CD4-positive, alpha-beta T cell (primary cell): ENCODE measurements at regions of chr18 and their contacts with region 1.

Region 1: DNA sequence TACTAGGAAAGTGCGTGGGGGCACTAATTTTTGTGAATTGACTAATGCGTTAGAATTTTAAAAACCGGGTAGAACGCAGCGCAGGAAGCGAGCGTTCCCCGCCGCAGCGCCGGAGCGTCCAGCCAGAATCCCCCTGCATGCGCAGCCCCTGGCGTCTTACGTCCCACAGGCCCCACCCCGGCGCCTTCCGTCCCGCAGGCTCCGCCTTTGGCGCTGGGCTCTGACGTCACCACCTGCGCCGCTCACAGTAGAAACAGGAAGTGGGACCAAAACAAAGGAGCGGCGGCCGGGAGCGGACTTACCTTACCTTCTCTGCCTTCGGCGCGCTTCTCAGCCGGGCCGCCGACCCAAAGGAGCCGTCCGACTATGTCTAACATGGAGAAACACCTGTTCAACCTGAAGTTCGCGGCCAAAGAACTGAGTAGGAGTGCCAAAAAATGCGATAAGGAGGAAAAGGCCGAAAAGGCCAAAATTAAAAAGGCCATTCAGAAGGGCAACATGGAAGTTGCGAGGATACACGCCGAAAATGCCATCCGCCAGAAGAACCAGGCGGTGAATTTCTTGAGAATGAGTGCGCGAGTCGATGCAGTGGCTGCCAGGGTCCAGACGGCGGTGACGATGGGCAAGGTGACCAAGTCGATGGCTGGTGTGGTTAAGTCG is at the start of gene CHMP1B:
- DNase-seq: peak; percentile 95 to 99 (median 97)
- ATAC-seq: peak; percentile 74
- H3K4me3 ChIP-seq: peak within 1 kb of the TSS; percentile 64
- H3K4me3 Mint-ChIP-seq: peak within 1 kb of the TSS; percentile 100
- H3K27ac ChIP-seq: peak within 1 kb of the TSS; percentile 85 to 92
- H3K27ac Mint-ChIP-seq: peak within 1 kb of the TSS; percentile 97
- H3K4me1 ChIP-seq: peaks cover 27% of the 10 kb centered on the region
- H3K4me1 Mint-ChIP-seq: peaks cover 53% of the 10 kb centered on the region
- H3K27me3 ChIP-seq: no peaks in the 10 kb centered on the region
- H3K27me3 Mint-ChIP-seq: no peaks in the 10 kb centered on the region
- CTCF ChIP-seq: no peak
- total RNA-seq, gene CHMP1B: 64.4 to 67.4 TPM

Region 2: GRCh38 chr18:10525371-10526210 is 1325.7 kb before region 1 on chr18 and contains the start of gene NAPG:
- CTCF ChIA-PET with region 1: no interaction called
- POLR2A ChIA-PET with region 1: no interaction called
- intact Hi-C with region 1: loop called (anchors 5 to 10 kb)
- DNase-seq: peak; percentile 75 to 98 (median 86)
- ATAC-seq: peak; percentile 85
- H3K4me3 ChIP-seq: peak within 1 kb of the TSS; percentile 87
- H3K4me3 Mint-ChIP-seq: peak within 1 kb of the TSS; percentile 99
- H3K27ac ChIP-seq: peak within 1 kb of the TSS; percentile 55 to 86
- H3K27ac Mint-ChIP-seq: peak within 1 kb of the TSS; percentile 96
- H3K4me1 ChIP-seq: peaks cover 42% of the 10 kb centered on the region
- H3K4me1 Mint-ChIP-seq: peaks cover 56% of the 10 kb centered on the region
- H3K27me3 ChIP-seq: peaks cover 0 to 5% of the 10 kb centered on the region in 2 experiments
- H3K27me3 Mint-ChIP-seq: no peaks in the 10 kb centered on the region
- CTCF ChIP-seq: no peak
- total RNA-seq, gene NAPG: 25.9 to 27.3 TPM

Region 3: GRCh38 chr18:11752116-11752911 is 99.0 kb before region 1 on chr18:
- CTCF ChIA-PET with region 1: no interaction called
- POLR2A ChIA-PET with region 1: interaction called, 3 read pairs
- intact Hi-C with region 1: loop called in 1 of 2 experiments (anchors 10 kb)
- DNase-seq: no peak
- ATAC-seq: no peak
- H3K4me3 ChIP-seq: no peak overlapping the region
- H3K4me3 Mint-ChIP-seq: no peak overlapping the region
- H3K27ac ChIP-seq: no peak overlapping the region
- H3K27ac Mint-ChIP-seq: no peak overlapping the region
- H3K4me1 ChIP-seq: peaks cover 3% of the 10 kb centered on the region
- H3K4me1 Mint-ChIP-seq: peaks cover 5% of the 10 kb centered on the region
- H3K27me3 ChIP-seq: peaks cover 18 to 41% of the 10 kb centered on the region in 2 experiments
- H3K27me3 Mint-ChIP-seq: peaks cover 72% of the 10 kb centered on the region
- CTCF ChIP-seq: no peak

Region 4: DNA sequence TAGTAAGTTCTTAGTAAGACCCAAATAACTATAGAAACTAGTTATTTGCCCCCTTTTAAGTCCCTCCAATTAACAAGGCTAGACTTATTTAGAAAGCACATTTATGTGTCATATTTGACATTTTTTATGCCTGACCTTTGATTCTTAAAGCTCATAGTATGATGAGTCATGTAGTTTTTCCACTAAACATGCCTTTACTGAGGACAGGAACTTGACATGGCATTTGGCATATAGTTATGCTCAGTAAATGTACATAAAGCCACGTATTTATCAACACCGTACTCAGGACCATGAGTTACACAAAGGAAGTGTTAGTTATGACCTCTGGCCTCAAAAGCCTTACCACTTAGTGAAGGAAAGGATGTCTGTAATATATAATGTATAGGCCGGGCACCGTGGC is 83.3 kb before region 1 on chr18:
- CTCF ChIA-PET with region 1: no interaction called
- POLR2A ChIA-PET with region 1: no interaction called
- intact Hi-C with region 1: no loop called
- DNase-seq: no peak
- ATAC-seq: no peak
- H3K4me3 ChIP-seq: no peak overlapping the region
- H3K4me3 Mint-ChIP-seq: no peak overlapping the region
- H3K27ac ChIP-seq: no peak overlapping the region
- H3K27ac Mint-ChIP-seq: no peak overlapping the region
- H3K4me1 ChIP-seq: no peaks in the 10 kb centered on the region
- H3K4me1 Mint-ChIP-seq: no peaks in the 10 kb centered on the region
- H3K27me3 ChIP-seq: no peaks in the 10 kb centered on the region
- H3K27me3 Mint-ChIP-seq: peaks cover 11% of the 10 kb centered on the region
- CTCF ChIP-seq: no peak

Region 5: GRCh38 chr18:11840493-11840892 is 10.8 kb before region 1 on chr18:
- CTCF ChIA-PET with region 1: no interaction called
- POLR2A ChIA-PET with region 1: interaction called, 20 read pairs
- intact Hi-C with region 1: no loop called
- DNase-seq: no peak
- ATAC-seq: no peak
- H3K4me3 ChIP-seq: no peak overlapping the region
- H3K4me3 Mint-ChIP-seq: no peak overlapping the region
- H3K27ac ChIP-seq: no peak overlapping the region
- H3K27ac Mint-ChIP-seq: no peak overlapping the region
- H3K4me1 ChIP-seq: no peaks in the 10 kb centered on the region
- H3K4me1 Mint-ChIP-seq: no peaks in the 10 kb centered on the region
- H3K27me3 ChIP-seq: peaks cover 0 to 2% of the 10 kb centered on the region in 2 experiments
- H3K27me3 Mint-ChIP-seq: no peaks in the 10 kb centered on the region
- CTCF ChIP-seq: no peak

Region 6: GRCh38 chr18:11908182-11909060 is 57.1 kb after region 1 on chr18 and contains the start of gene MPPE1:
- CTCF ChIA-PET with region 1: no interaction called
- POLR2A ChIA-PET with region 1: interaction called, 43 read pairs
- intact Hi-C with region 1: loop called (anchors 1 kb)
- DNase-seq: peak; percentile 67 to 94 (median 82)
- ATAC-seq: peak; percentile 90
- H3K4me3 ChIP-seq: peak within 1 kb of the TSS; percentile 89
- H3K4me3 Mint-ChIP-seq: peak within 1 kb of the TSS; percentile 97
- H3K27ac ChIP-seq: peak within 1 kb of the TSS; percentile 89 to 94
- H3K27ac Mint-ChIP-seq: peak within 1 kb of the TSS; percentile 98
- H3K4me1 ChIP-seq: peaks cover 24% of the 10 kb centered on the region
- H3K4me1 Mint-ChIP-seq: peaks cover 31% of the 10 kb centered on the region
- H3K27me3 ChIP-seq: no peaks in the 10 kb centered on the region
- H3K27me3 Mint-ChIP-seq: no peaks in the 10 kb centered on the region
- CTCF ChIP-seq: no peak
- total RNA-seq, gene MPPE1: 62.6 to 68.3 TPM

Region 7: GRCh38 chr18:11925800-11926481 is 74.7 kb after region 1 on chr18:
- CTCF ChIA-PET with region 1: no interaction called
- POLR2A ChIA-PET with region 1: no interaction called
- intact Hi-C with region 1: no loop called
- DNase-seq: no peak
- ATAC-seq: no peak
- H3K4me3 ChIP-seq: no peak overlapping the region
- H3K4me3 Mint-ChIP-seq: no peak overlapping the region
- H3K27ac ChIP-seq: no peak overlapping the region
- H3K27ac Mint-ChIP-seq: no peak overlapping the region
- H3K4me1 ChIP-seq: no peaks in the 10 kb centered on the region
- H3K4me1 Mint-ChIP-seq: no peaks in the 10 kb centered on the region
- H3K27me3 ChIP-seq: peaks cover 0 to 2% of the 10 kb centered on the region in 2 experiments
- H3K27me3 Mint-ChIP-seq: no peaks in the 10 kb centered on the region
- CTCF ChIP-seq: no peak

Region 8: GRCh38 chr18:11980555-11981382 is 129.5 kb after region 1 on chr18:
- CTCF ChIA-PET with region 1: no interaction called
- POLR2A ChIA-PET with region 1: interaction called, 26 read pairs
- intact Hi-C with region 1: loop called (anchors 1 kb)
- DNase-seq: peak; percentile 89 to 98 (median 94)
- ATAC-seq: peak; percentile 94
- H3K4me3 ChIP-seq: peak overlapping the region; percentile 64
- H3K4me3 Mint-ChIP-seq: peak overlapping the region; percentile 93
- H3K27ac ChIP-seq: no peak overlapping the region
- H3K27ac Mint-ChIP-seq: peak overlapping the region; percentile 49
- H3K4me1 ChIP-seq: peaks cover 19% of the 10 kb centered on the region
- H3K4me1 Mint-ChIP-seq: peaks cover 12% of the 10 kb centered on the region
- H3K27me3 ChIP-seq: no peaks in the 10 kb centered on the region
- H3K27me3 Mint-ChIP-seq: no peaks in the 10 kb centered on the region
- CTCF ChIP-seq: no peak